Activated CD4-positive, alpha-beta T cell treated with anti-CD3 and anti-CD28 coated beads for 36 hours (primary cell): ENCODE measurements at regions of chr17 and their contacts with region 1.

Region 1: DNA sequence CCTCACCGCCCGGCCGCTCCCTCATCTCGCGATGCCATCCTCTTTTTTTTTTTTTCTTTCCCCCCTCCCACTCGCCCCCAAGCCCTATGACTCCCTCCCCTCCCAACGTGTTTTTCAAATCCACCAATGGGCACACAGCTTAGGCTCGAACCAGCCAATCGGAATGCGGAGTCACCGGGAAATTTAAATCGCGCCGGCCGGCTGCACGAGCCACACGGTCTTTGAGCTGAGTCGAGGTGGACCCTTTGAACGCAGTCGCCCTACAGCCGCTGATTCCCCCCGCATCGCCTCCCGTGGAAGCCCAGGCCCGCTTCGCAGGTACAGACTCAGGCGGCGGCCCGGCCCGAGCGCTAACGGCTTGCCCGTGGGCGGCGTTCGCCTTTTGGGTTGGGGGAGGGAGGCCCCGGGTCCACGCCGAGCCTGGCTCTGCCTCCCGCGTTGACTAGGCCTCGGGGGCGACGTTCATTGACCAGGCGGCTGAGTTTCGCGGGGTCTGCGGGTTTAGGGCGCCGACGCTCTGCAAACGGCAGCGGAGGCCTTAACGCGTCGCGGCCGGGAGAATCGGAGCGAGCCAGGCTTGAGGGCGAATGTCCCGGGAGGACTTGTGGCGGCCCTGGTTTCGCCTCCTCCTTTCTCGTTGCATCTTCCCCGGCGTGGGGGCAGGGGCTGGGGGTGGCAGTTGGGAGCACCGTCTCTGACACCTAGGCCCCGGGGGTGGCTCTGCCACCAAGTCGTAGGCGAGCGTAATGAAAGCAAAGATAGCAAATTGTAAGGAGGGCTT is at the start of gene KPNA2:
- DNase-seq: peak; percentile 93
- ATAC-seq: peak; percentile 91
- H3K4me3 Mint-ChIP-seq: peak within 1 kb of the TSS; percentile 96
- H3K27ac Mint-ChIP-seq: peak within 1 kb of the TSS; percentile 97
- H3K4me1 Mint-ChIP-seq: peaks cover 18% of the 10 kb centered on the region
- H3K27me3 Mint-ChIP-seq: no peaks in the 10 kb centered on the region
- total RNA-seq, gene KPNA2: 186 to 190 TPM

Region 2: GRCh38 chr17:67671492-67671891 is 364.2 kb before region 1 on chr17:
- CTCF ChIA-PET with region 1: no interaction called
- POLR2A ChIA-PET with region 1: no interaction called
- intact Hi-C with region 1: no loop called
- DNase-seq: no peak
- ATAC-seq: no peak
- H3K4me3 Mint-ChIP-seq: no peak overlapping the region
- H3K27ac Mint-ChIP-seq: no peak overlapping the region
- H3K4me1 Mint-ChIP-seq: no peaks in the 10 kb centered on the region
- H3K27me3 Mint-ChIP-seq: no peaks in the 10 kb centered on the region

Region 3: GRCh38 chr17:67717624-67718329 is 317.9 kb before region 1 on chr17 and contains the start of gene NOL11:
- CTCF ChIA-PET with region 1: no interaction called
- POLR2A ChIA-PET with region 1: no interaction called
- intact Hi-C with region 1: loop called (anchors 1 to 10 kb)
- DNase-seq: peak; percentile 100
- ATAC-seq: peak; percentile 96
- H3K4me3 Mint-ChIP-seq: peak within 1 kb of the TSS; percentile 88
- H3K27ac Mint-ChIP-seq: peak within 1 kb of the TSS; percentile 98
- H3K4me1 Mint-ChIP-seq: peaks cover 19% of the 10 kb centered on the region
- H3K27me3 Mint-ChIP-seq: no peaks in the 10 kb centered on the region
- total RNA-seq, gene NOL11: 79.3 to 79.7 TPM

Region 4: DNA sequence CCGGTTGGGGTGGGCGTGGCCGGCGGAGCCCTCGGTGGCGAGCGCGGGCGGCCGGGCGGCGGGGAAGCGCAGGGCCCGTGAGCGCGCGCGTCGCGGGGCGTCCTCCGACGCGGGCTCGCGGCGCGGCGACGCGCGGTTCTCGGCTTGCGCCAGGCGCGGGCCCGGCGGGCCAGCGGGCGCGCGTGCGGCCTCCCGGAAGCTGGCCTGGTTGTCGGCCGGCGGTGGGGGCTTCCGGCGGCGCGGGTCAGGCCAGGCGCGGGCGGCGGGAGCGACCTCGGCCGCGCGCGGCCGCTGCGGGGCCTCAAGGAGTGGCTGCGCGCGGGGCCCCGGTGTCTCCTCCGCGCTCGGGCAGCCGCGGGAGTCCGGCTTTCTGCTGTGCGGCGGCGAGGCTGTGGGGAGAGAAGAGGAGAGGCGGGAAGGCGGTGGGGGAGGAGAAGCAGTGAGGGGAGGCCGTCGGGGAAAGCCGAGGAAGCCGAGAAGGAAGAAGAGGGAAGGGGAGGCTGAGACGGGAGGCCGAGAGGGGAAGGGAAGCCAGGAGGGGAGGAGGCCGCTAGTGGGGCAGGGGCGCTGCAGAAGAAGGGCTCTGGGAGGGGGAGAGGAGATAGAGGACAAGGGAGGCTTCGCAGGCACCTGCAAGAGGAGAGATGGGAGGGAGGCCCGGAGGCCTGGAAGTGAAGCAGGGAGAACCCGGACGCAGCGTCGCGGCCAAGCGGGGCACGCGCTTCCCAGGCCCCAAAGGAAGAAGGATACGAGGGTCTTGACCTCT is 41.9 kb before region 1 on chr17:
- CTCF ChIA-PET with region 1: no interaction called
- POLR2A ChIA-PET with region 1: interaction called, 8 read pairs
- intact Hi-C with region 1: loop called in 1 of 2 experiments (anchors 1 kb)
- DNase-seq: peak; percentile 84
- ATAC-seq: peak; percentile 57
- H3K4me3 Mint-ChIP-seq: peak overlapping the region; percentile 75
- H3K27ac Mint-ChIP-seq: peak overlapping the region; percentile 84
- H3K4me1 Mint-ChIP-seq: peaks cover 26% of the 10 kb centered on the region
- H3K27me3 Mint-ChIP-seq: peaks cover 13% of the 10 kb centered on the region

Region 5: GRCh38 chr17:68047153-68047846 is 11.6 kb after region 1 on chr17:
- CTCF ChIA-PET with region 1: interaction called, 7 read pairs
- POLR2A ChIA-PET with region 1: interaction called, 16 read pairs
- intact Hi-C with region 1: no loop called
- DNase-seq: no peak
- ATAC-seq: no peak
- H3K4me3 Mint-ChIP-seq: no peak overlapping the region
- H3K27ac Mint-ChIP-seq: no peak overlapping the region
- H3K4me1 Mint-ChIP-seq: no peaks in the 10 kb centered on the region
- H3K27me3 Mint-ChIP-seq: no peaks in the 10 kb centered on the region

Region 6: GRCh38 chr17:68172461-68172954 is 136.8 kb after region 1 on chr17:
- CTCF ChIA-PET with region 1: no interaction called
- POLR2A ChIA-PET with region 1: interaction called, 10 read pairs
- intact Hi-C with region 1: no loop called
- DNase-seq: peak; percentile 84
- ATAC-seq: peak; percentile 69
- H3K4me3 Mint-ChIP-seq: no peak overlapping the region
- H3K27ac Mint-ChIP-seq: no peak overlapping the region
- H3K4me1 Mint-ChIP-seq: peaks cover 17% of the 10 kb centered on the region
- H3K27me3 Mint-ChIP-seq: no peaks in the 10 kb centered on the region

Region 7: DNA sequence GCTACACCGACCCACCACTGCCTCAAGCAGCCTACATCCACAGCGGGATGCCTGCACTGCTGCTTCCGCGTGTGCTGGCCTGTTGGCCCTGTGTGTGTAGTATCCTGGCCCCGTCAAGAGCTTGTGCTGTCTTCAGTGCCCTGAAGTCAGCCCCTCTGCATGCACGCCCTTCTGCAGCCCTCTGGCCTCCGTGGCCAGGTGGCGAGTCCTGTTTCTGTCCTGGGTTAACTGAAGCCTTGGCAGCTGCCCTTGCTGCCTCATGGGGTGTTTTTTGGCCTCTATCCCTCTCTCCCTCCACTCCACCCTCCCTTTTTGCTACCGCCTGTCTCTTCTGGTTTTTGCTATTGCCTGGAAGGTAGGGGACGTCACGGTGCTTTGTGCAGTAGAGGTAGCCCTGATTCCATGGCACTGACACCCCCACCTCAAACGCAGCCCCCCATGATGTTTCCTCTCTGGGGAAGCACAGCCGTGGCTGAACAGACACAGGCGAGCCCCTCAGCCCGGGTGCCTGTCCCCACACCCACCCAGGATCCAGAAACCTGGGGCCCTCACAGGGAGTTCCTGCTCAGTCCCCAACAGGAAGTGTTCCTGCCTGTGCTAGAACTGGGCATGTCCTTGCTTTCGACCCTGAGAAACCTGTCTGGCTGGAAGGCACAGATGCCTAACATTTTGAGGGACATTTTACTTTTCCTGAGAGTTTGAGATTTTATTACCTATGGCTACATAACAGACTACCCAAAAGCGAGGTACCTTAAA is 193.3 kb after region 1 on chr17:
- CTCF ChIA-PET with region 1: no interaction called
- POLR2A ChIA-PET with region 1: no interaction called
- intact Hi-C with region 1: no loop called
- DNase-seq: no peak
- ATAC-seq: no peak
- H3K4me3 Mint-ChIP-seq: no peak overlapping the region
- H3K27ac Mint-ChIP-seq: peak overlapping the region; percentile 77
- H3K4me1 Mint-ChIP-seq: peaks cover 31% of the 10 kb centered on the region
- H3K27me3 Mint-ChIP-seq: no peaks in the 10 kb centered on the region

Region 8: GRCh38 chr17:68247445-68248198 is 211.9 kb after region 1 on chr17 and contains the start of gene AMZ2:
- CTCF ChIA-PET with region 1: no interaction called
- POLR2A ChIA-PET with region 1: interaction called, 5 read pairs
- intact Hi-C with region 1: loop called (anchors 1 to 5 kb)
- DNase-seq: peak; percentile 98
- ATAC-seq: peak; percentile 84
- H3K4me3 Mint-ChIP-seq: peak within 1 kb of the TSS; percentile 88
- H3K27ac Mint-ChIP-seq: peak within 1 kb of the TSS; percentile 99
- H3K4me1 Mint-ChIP-seq: peaks cover 37% of the 10 kb centered on the region
- H3K27me3 Mint-ChIP-seq: no peaks in the 10 kb centered on the region
- total RNA-seq, gene AMZ2: 119 to 150 TPM

Region 9: GRCh38 chr17:69327060-69327831 is 1291.5 kb after region 1 on chr17 and contains the start of gene ABCA5:
- CTCF ChIA-PET with region 1: no interaction called
- POLR2A ChIA-PET with region 1: no interaction called
- intact Hi-C with region 1: loop called in 1 of 2 experiments (anchors 1 kb)
- DNase-seq: peak; percentile 92
- ATAC-seq: peak; percentile 98
- H3K4me3 Mint-ChIP-seq: peak within 1 kb of the TSS; percentile 95
- H3K27ac Mint-ChIP-seq: peak within 1 kb of the TSS; percentile 97
- H3K4me1 Mint-ChIP-seq: peaks cover 43% of the 10 kb centered on the region
- H3K27me3 Mint-ChIP-seq: peaks cover 2% of the 10 kb centered on the region
- total RNA-seq, gene ABCA5: 14.4 to 15.1 TPM